ACHN (cell line): ENCODE measurements at regions of chr1 and their contacts with region 1.

Region 1: GRCh38 chr1:110312188-110313121 is 26.7 kb upstream of the RBM15 start:
- DNase-seq: peak; percentile 63

Region 2: GRCh38 chr1:110209715-110210603 is 102.5 kb before region 1 on chr1 and contains the start of gene KCNC4:
- in situ Hi-C with region 1: loop called (anchors 25 kb)
- DNase-seq: peak; percentile 79